ENCODE measurements at regions of chr5 and their contacts with region 1.

Region 1: DNA sequence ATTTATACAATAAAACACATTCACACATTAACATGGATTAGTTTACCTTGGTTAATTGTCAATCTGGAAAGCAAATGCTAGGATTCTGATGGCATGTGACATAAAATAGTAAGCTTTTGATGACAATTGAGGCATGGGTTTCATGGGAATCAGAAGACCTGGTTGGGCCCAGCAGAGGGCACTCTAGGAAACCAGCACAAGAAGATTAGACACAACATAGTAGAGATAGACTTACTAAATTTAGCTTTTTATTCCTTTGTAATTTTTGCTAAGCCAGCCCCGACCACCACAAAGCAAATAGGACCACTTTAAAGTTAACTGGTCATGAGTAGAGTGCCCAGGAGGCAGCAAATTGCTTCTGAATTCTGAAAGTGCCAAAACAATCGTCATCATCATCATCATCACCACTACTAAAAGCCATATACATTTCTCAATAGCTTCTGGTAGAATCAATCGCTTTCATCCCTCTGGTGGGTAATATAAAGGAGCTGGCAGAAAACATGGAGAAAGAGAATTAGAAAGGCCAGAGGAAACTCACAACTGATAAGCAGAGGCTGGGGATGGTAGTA is 163.2 kb downstream of the ARRDC3 start:
- DNase-seq: peak; percentile 45 to 65 (median 60)
- H3K4me3 ChIP-seq: no peak overlapping the region
- H3K27ac ChIP-seq: no peak overlapping the region
- H3K4me1 ChIP-seq: no peaks in the 10 kb centered on the region
- H3K27me3 ChIP-seq: no peaks in the 10 kb centered on the region

Region 2: GRCh38 chr5:91232523-91232922 is 12.6 kb after region 1 on chr5:
- CTCF ChIA-PET with region 1: interaction called, 14 read pairs
- POLR2A ChIA-PET with region 1: no interaction called
- DNase-seq: no peak
- H3K4me3 ChIP-seq: no peak overlapping the region
- H3K27ac ChIP-seq: no peak overlapping the region
- H3K4me1 ChIP-seq: peaks cover 0 to 3% (median 1%) of the 10 kb centered on the region in 4 experiments
- H3K27me3 ChIP-seq: no peaks in the 10 kb centered on the region

Region 3: DNA sequence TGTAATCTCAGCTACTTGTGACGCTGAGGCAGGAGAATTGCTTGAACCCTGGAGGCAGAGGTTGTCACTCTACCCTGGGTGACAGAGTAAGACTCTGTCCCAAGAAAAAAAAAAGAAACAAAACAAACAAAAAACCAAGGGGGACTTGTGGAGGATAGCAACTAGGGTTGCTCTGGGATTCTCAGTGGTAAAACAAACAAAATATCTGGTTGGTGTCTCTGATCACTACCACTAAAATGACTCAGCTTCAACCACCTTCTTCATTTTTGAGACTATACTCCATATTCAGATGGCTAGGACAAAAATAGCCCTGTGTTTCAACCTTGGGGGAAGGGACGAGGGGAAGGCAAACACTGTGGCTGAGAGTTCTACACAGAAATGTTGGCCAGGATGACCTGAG is 53.0 kb after region 1 on chr5:
- CTCF ChIA-PET with region 1: interaction called, 12 read pairs
- POLR2A ChIA-PET with region 1: no interaction called
- DNase-seq: no peak
- H3K4me3 ChIP-seq: no peak overlapping the region
- H3K27ac ChIP-seq: no peak overlapping the region
- H3K4me1 ChIP-seq: peaks cover 0 to 14% (median 0%) of the 10 kb centered on the region in 4 experiments
- H3K27me3 ChIP-seq: peaks cover 0 to 3% (median 0%) of the 10 kb centered on the region in 5 experiments